ENCODE measurements at regions of chr3 and their contacts with region 1.

Region 1: GRCh38 chr3:43155464-43156121 is 49.7 kb upstream of the POMGNT2 start:
- DNase-seq: peak; percentile 68 to 93
- H3K4me3 ChIP-seq: no peak overlapping the region
- CTCF ChIP-seq: peak in 1 of 3 donors; percentile 7
- POLR2A ChIP-seq: no peak

Region 2: DNA sequence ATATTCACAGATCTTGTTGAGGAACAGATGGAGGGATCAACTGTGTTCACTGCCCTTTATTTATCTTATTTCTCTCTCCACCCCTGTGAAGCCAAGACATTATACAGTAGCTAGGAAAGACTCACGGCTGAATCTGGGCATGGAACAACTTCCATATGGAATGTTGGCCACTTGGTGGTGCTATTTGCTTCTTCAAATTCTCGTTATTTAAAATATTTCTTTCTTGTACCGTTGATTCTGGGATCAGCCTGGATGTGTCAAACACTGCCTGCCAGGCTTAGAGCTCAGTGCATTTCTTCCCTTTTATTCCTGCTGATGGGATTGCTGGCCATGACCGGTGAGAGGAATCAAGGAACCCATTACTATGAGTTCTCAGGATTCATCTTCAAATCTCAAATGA is 194.0 kb before region 1 on chr3:
- intact Hi-C with region 1: loop called (anchors 5 kb)
- DNase-seq: peak in 1 of 2 donors; percentile 39
- H3K4me3 ChIP-seq: no peak overlapping the region
- CTCF ChIP-seq: peak in 1 of 3 donors; percentile 7
- POLR2A ChIP-seq: no peak

Region 3: GRCh38 chr3:43363621-43364266 is 208.2 kb after region 1 on chr3:
- intact Hi-C with region 1: loop called (anchors 10 kb)
- DNase-seq: no peak
- H3K4me3 ChIP-seq: no peak overlapping the region
- CTCF ChIP-seq: no peak
- POLR2A ChIP-seq: no peak

Region 4: DNA sequence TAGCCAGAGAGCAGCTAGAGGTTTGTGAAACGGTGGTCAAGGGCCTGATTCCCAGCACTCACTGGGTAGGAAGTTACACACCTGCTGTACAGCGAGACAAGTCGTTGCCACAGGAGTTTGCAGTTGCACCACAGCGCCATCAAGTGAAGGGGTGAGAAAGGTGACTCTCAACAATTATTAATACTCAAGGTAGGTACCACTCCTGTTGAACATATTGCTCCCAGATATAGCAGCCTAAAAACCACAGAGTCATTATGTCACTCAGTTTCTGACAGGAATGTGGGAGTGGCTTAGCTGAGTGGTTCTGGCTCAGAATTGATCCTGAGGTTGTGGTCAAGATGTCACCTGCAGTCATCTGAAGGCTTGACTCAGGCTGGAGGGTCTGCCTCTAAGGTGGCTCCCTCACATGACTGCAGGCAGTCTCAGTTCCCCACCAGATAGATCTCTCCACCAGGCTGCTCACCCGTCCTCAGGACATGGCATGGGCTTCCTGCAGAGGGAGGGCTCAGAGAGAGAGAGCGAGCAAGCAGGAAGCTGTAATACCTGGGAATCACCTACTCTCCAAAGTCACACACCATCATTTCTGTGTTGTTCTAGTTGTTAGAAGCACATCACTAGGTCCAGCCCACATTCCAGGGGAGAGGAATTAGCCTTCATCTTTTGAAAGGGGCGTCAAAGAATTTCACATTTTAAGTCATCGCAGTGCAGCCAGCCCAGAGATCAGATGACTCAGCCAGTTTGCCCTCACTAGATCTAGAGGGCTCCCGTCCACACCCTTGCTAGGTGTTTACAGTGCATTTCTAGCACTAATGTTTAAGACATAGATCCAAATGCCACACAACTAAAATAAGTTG is 483.2 kb after region 1 on chr3:
- intact Hi-C with region 1: loop called (anchors 10 kb)
- DNase-seq: no peak
- H3K4me3 ChIP-seq: no peak overlapping the region
- CTCF ChIP-seq: no peak
- POLR2A ChIP-seq: no peak

Measured in lower leg skin (tissue), 4 donors.